CD4-positive, alpha-beta T cell (primary cell): ENCODE measurements at regions of chrX and their contacts with region 1.

Region 1: GRCh38 chrX:119899125-119899524 is 3.4 kb downstream of the AKAP14 start:
- DNase-seq: peak in 2 of 14 experiments; percentile 29 to 51
- ATAC-seq: no peak
- H3K4me3 ChIP-seq: no peak overlapping the region
- H3K4me3 Mint-ChIP-seq: no peak overlapping the region
- H3K27ac ChIP-seq: no peak overlapping the region
- H3K27ac Mint-ChIP-seq: no peak overlapping the region
- H3K4me1 ChIP-seq: no peaks in the 10 kb centered on the region
- H3K4me1 Mint-ChIP-seq: no peaks in the 10 kb centered on the region
- H3K27me3 ChIP-seq: no peaks in the 10 kb centered on the region
- H3K27me3 Mint-ChIP-seq: no peaks in the 10 kb centered on the region
- CTCF ChIP-seq: no peak

Region 2: DNA sequence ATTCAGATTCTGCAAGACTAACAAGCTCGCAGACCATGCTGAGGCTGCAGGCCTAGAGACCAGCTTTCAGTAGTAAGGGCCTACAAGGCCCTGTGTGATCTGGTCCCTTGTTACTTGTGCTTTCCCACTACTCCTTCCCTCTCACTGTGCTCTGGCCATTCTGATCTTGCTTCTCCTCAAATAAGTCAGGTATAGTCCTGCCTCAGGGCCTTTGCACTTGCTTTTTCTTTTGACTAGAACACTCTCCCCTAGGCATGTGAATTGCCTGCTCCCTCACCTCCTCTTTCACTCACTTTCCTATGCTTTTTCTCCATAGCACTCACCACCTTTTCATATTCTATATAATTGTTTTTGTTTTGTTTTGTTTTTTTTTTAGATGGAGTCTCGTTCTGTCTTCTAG is 18.8 kb after region 1 on chrX:
- CTCF ChIA-PET with region 1: no interaction called
- POLR2A ChIA-PET with region 1: no interaction called
- intact Hi-C with region 1: loop called in 1 of 2 experiments (anchors 1 kb)
- DNase-seq: no peak
- ATAC-seq: no peak
- H3K4me3 ChIP-seq: no peak overlapping the region
- H3K4me3 Mint-ChIP-seq: no peak overlapping the region
- H3K27ac ChIP-seq: no peak overlapping the region
- H3K27ac Mint-ChIP-seq: no peak overlapping the region
- H3K4me1 ChIP-seq: no peaks in the 10 kb centered on the region
- H3K4me1 Mint-ChIP-seq: no peaks in the 10 kb centered on the region
- H3K27me3 ChIP-seq: no peaks in the 10 kb centered on the region
- H3K27me3 Mint-ChIP-seq: no peaks in the 10 kb centered on the region
- CTCF ChIP-seq: no peak

Region 3: GRCh38 chrX:120137439-120137838 is 238.3 kb after region 1 on chrX:
- CTCF ChIA-PET with region 1: no interaction called
- POLR2A ChIA-PET with region 1: no interaction called
- intact Hi-C with region 1: no loop called
- DNase-seq: no peak
- ATAC-seq: no peak
- H3K4me3 ChIP-seq: no peak overlapping the region
- H3K4me3 Mint-ChIP-seq: no peak overlapping the region
- H3K27ac ChIP-seq: no peak overlapping the region
- H3K27ac Mint-ChIP-seq: no peak overlapping the region
- H3K4me1 ChIP-seq: no peaks in the 10 kb centered on the region
- H3K4me1 Mint-ChIP-seq: no peaks in the 10 kb centered on the region
- H3K27me3 ChIP-seq: no peaks in the 10 kb centered on the region
- H3K27me3 Mint-ChIP-seq: no peaks in the 10 kb centered on the region
- CTCF ChIP-seq: no peak

Region 4: GRCh38 chrX:120358737-120359456 is 459.8 kb after region 1 on chrX:
- CTCF ChIA-PET with region 1: no interaction called
- POLR2A ChIA-PET with region 1: no interaction called
- intact Hi-C with region 1: no loop called
- DNase-seq: no peak
- ATAC-seq: no peak
- H3K4me3 ChIP-seq: no peak overlapping the region
- H3K4me3 Mint-ChIP-seq: no peak overlapping the region
- H3K27ac ChIP-seq: no peak overlapping the region
- H3K27ac Mint-ChIP-seq: no peak overlapping the region
- H3K4me1 ChIP-seq: no peaks in the 10 kb centered on the region
- H3K4me1 Mint-ChIP-seq: no peaks in the 10 kb centered on the region
- H3K27me3 ChIP-seq: no peaks in the 10 kb centered on the region
- H3K27me3 Mint-ChIP-seq: no peaks in the 10 kb centered on the region
- CTCF ChIP-seq: no peak

Region 5: GRCh38 chrX:120514236-120514635 is 615.1 kb after region 1 on chrX:
- CTCF ChIA-PET with region 1: no interaction called
- POLR2A ChIA-PET with region 1: no interaction called
- intact Hi-C with region 1: no loop called
- DNase-seq: peak in 1 of 14 experiments; percentile 4
- ATAC-seq: no peak
- H3K4me3 ChIP-seq: no peak overlapping the region
- H3K4me3 Mint-ChIP-seq: no peak overlapping the region
- H3K27ac ChIP-seq: no peak overlapping the region
- H3K27ac Mint-ChIP-seq: no peak overlapping the region
- H3K4me1 ChIP-seq: no peaks in the 10 kb centered on the region
- H3K4me1 Mint-ChIP-seq: no peaks in the 10 kb centered on the region
- H3K27me3 ChIP-seq: no peaks in the 10 kb centered on the region
- H3K27me3 Mint-ChIP-seq: no peaks in the 10 kb centered on the region
- CTCF ChIP-seq: no peak